Thyroid gland (tissue), 4 donors: ENCODE measurements at regions of chr19 and their contacts with region 1.

Region 1: GRCh38 chr19:36819130-36819630 is 19.0 kb downstream of the ZNF790 start:
- DNase-seq: no peak
- H3K4me3 ChIP-seq: no peak overlapping the region
- H3K27ac ChIP-seq: no peak overlapping the region
- H3K4me1 ChIP-seq: no peaks in the 10 kb centered on the region
- H3K27me3 ChIP-seq: no peaks in the 10 kb centered on the region
- CTCF ChIP-seq: no peak
- POLR2A ChIP-seq: no peak

Region 2: GRCh38 chr19:36638862-36639510 is 180.2 kb before region 1 on chr19:
- intact Hi-C with region 1: loop called (anchors 10 kb)
- DNase-seq: no peak
- H3K4me3 ChIP-seq: no peak overlapping the region
- H3K27ac ChIP-seq: no peak overlapping the region
- H3K4me1 ChIP-seq: no peaks in the 10 kb centered on the region
- H3K27me3 ChIP-seq: no peaks in the 10 kb centered on the region
- CTCF ChIP-seq: no peak
- POLR2A ChIP-seq: no peak

Region 3: GRCh38 chr19:36876993-36877938 is 58.1 kb after region 1 on chr19:
- intact Hi-C with region 1: loop called (anchors 5 kb)
- DNase-seq: no peak
- H3K4me3 ChIP-seq: no peak overlapping the region
- H3K27ac ChIP-seq: no peak overlapping the region
- H3K4me1 ChIP-seq: no peaks in the 10 kb centered on the region
- H3K27me3 ChIP-seq: no peaks in the 10 kb centered on the region
- CTCF ChIP-seq: no peak
- POLR2A ChIP-seq: no peak

Region 4: DNA sequence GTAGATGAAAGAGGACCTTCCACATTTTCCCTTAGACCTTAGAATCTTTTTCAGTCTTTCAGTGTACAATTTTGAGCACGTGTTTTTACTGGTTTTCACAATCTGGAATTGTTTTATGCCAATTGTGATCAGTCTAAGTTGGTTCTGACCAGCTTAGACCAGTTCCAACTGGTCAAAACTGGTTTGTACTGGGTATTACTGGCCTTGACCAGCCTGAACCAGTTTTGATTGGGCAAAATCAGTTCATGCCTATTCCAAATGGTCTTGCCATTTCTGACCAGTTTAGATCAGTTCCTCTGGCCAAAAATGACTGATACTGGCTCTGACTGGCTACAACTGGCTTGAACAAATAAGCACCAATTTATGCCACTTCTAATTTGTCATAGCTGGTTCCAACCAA is 316.9 kb after region 1 on chr19:
- intact Hi-C with region 1: loop called (anchors 10 kb)
- DNase-seq: no peak
- H3K4me3 ChIP-seq: no peak overlapping the region
- H3K27ac ChIP-seq: no peak overlapping the region
- H3K4me1 ChIP-seq: no peaks in the 10 kb centered on the region
- H3K27me3 ChIP-seq: no peaks in the 10 kb centered on the region
- CTCF ChIP-seq: no peak
- POLR2A ChIP-seq: no peak